Ascending aorta (tissue), 2 donors: ENCODE measurements at regions of chr10 and their contacts with region 1.

Region 1: DNA sequence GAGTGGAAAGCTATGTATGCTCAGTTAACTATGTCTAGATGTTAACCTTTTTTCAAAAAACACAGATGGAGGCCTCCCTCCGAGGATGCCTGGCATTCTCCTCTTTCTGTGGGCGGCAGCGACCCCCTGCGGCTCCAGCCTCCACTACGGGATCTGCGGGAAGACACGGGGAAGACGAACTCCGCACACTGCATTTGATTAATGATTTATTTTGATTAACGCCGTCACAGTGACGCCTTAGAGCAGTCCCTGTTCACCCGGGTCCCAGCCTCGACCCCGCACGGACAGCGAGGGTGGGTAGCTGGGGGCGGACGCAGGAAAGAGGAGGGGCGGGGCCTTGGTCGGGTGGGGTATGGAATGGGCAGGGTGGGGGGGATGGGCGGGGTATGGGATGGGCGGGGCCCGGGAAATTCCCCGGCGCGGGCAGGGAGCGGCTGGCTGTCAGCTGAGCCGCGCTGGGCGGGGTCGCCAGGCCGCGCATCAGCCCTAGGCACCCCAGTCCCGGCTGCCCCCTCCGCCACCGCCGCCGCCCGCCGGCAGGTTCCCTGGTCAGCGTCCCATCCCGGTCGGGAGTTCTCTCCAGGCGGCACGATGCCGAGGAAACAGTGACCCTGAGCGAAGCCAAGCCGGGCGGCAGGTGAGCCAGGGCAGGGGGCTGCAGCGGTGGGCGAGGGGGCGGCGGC is at the start of gene OPTN:
- DNase-seq: peak; percentile 36 to 88
- H3K4me3 ChIP-seq: peak within 1 kb of the TSS; percentile 97 to 99
- H3K27ac ChIP-seq: peak within 1 kb of the TSS; percentile 96 to 99
- H3K4me1 ChIP-seq: peaks cover 2 to 7% of the 10 kb centered on the region in 2 donors
- H3K27me3 ChIP-seq: no peaks in the 10 kb centered on the region
- CTCF ChIP-seq: peak; percentile 77 to 88 (median 85)
- total RNA-seq, gene OPTN: 48.5 TPM

Region 2: DNA sequence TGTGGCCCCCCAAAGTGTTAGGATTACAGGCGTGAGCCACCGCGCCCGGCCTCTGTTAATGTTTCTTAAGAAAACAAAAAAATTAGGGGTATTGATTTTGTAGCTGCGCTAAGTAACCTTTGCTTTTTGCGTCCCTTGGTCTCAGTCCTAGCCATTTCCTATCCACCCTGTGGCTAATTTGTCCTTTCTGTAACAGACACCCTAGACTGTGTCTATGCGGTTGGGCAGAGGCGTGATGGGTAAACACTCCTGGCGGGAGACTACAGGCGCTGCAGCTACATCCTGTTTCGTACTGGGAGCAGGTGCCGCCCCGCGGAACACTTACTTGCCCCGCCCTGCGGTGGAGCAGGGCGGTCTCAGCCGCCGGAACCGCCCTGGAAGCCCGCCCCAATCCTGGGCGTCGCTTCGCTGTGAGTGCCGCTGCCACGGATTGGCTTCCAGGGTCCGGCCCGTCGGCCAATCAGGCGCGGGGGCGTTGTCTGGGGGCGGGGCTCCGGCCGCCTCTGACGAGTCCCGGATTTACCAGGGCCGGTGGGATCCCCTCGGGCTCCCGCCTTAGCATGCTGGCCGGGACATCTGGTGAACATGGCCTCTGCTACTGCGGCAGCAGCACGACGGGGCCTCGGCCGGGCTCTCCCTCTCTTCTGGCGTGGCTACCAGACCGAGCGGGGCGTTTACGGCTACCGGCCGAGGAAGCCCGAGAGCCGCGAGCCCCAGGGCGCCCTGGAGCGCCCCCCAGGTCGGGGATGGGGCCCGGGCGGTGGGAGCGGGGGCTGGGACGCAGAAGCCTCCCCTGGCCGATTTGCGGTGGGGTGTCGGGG is 1031.1 kb before region 1 on chr10 and contains the start of gene DHTKD1:
- intact Hi-C with region 1: loop called (anchors 10 kb)
- DNase-seq: peak; percentile 93 to 99
- H3K4me3 ChIP-seq: peak within 1 kb of the TSS; percentile 72 to 90
- H3K27ac ChIP-seq: peak within 1 kb of the TSS; percentile 72 to 85
- H3K4me1 ChIP-seq: peaks cover 0 to 3% of the 10 kb centered on the region in 2 donors
- H3K27me3 ChIP-seq: no peaks in the 10 kb centered on the region
- CTCF ChIP-seq: peak; percentile 21 to 63 (median 43)
- total RNA-seq, gene DHTKD1: 12.6 TPM

Region 3: DNA sequence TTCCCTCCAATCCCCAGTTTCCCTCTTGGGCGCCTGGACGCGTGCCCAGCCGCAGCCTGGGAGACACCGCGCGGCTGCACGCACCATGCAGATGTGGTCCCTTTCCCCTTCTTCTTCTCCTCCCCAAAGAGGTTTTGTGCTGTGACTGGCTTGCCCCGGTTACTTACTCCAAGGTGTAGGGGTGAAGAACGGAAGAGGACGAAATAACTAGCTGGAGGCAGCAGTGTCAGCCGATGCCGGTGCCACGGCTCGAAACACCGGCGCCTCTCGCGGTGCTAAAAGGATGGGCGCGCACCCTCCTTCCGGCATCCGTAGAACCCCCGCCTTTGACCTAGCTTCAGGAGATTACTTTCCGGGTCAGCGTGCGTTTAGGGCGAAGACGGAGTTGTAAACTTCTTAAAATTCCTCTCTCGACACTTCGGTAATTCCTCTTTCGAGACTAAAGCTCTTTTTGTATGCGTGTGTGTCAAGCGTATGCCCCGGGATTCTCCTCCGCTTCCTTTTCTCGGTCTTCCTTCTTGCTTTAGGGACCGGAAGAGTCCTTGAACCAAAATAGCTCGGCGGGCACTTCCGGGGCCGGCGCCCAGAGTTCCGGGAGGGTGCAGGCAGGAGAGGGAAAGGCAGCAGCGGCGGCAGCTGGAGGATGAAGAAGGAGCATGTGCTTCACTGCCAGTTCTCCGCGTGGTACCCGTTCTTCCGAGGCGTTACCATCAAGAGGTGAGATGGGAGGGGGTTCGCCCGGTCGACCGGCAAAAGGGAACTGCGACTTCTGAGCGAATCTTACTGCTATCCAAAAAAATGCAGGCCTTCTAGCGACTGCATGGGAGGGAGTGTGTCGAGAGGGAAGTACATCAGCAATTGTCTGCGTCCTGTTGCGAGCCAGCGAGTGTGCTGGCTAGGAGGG is 904.0 kb before region 1 on chr10 and contains the starts of genes CDC123 and NUDT5:
- intact Hi-C with region 1: loop called (anchors 5 kb)
- DNase-seq: peak; percentile 36 to 91
- H3K4me3 ChIP-seq: peak within 1 kb of the TSS; percentile 71 to 89
- H3K27ac ChIP-seq: peak within 1 kb of the TSS; percentile 88 to 92
- H3K4me1 ChIP-seq: peaks cover 9 to 27% of the 10 kb centered on the region in 2 donors
- H3K27me3 ChIP-seq: no peaks in the 10 kb centered on the region
- CTCF ChIP-seq: peak in 1 of 3 experiments; percentile 7
- total RNA-seq, gene CDC123: 33.2 TPM
- total RNA-seq, gene NUDT5: 10.2 TPM

Region 4: DNA sequence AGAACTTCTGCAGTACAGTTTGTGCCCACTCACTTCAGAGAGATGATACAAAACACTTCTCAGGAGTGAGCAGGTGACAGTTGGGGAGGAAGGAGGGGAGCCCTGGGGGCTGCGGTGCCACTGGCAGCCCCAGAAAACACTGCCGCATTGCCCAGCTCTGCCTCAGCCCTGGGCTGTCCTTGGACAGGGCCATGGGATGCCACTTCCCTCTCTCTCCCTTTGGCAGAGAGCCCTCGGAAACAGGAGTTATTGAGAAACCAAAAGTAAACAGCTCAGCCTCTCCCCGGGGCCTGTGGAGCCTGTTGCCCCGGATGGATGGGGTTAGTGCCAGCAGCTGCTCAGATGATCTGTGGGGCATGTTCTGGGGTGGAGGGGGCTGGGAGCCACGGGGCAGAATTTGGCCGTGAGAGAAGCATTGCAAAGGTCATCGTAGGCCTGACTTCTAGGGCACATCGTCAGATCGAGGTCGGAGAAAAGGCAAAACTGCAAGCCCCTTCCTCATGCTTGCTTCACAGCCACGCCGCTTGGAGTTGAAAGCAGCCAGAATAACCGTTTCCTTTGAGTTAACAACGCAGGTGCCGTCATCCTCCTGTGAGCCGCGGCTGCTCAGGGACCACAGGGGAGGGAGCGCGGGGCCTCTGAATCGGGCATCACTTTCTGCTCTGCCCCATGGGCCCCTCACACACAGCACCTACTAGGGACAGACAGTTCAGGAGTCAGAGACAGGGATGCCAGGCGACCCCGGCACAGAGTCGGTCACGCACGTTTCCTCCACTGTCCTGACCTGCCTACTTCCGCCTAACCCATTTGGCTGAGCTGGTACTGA is 494.0 kb before region 1 on chr10:
- intact Hi-C with region 1: no loop called
- DNase-seq: peak; percentile 32 to 76
- H3K4me3 ChIP-seq: peak overlapping the region; percentile 33 to 49
- H3K27ac ChIP-seq: peak overlapping the region in 1 of 2 donors; percentile 48
- H3K4me1 ChIP-seq: no peaks in the 10 kb centered on the region
- H3K27me3 ChIP-seq: no peaks in the 10 kb centered on the region
- CTCF ChIP-seq: no peak

Region 5: DNA sequence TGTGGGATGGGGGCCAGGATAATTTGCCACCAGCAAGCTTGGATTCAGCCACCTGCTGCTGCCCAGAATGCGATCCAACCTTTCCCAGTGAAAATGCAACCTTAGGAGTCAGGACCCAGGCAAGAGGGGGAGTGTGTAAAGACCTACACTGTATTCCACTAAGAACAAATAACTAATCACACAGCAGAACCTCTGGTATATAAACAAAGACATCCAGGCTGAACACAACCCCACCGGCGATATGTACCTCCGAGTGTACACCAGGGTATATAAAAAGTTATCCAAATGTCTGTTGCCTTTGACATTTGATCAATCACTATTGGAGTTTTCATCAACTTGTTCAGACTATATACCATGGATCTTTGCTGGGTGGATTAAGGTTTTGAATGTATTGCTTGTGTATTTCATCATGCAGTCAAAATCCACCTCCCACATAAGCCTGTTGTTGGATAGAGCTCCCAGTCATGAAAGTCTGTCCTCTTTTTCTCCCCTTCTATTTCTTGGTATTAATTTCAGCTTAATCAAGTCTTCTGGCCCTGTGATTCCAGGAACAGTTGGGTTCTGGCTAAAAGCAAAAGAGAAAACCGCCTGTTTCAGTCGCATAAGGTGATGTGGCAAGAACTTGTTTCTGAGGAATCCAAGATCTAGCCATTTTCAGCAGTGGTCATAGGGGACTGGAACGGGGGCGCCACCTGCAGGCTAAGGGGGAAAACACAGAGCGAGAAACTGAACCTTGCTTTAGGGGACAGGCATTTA is 389.0 kb before region 1 on chr10:
- intact Hi-C with region 1: loop called (anchors 5 kb)
- DNase-seq: peak in 1 of 2 donors; percentile 88
- H3K4me3 ChIP-seq: no peak overlapping the region
- H3K27ac ChIP-seq: peak overlapping the region; percentile 82
- H3K4me1 ChIP-seq: peaks cover 15 to 39% of the 10 kb centered on the region in 2 donors
- H3K27me3 ChIP-seq: no peaks in the 10 kb centered on the region
- CTCF ChIP-seq: peak; percentile 87 to 94 (median 90)

Region 6: GRCh38 chr10:13001041-13001886 is 98.5 kb before region 1 on chr10 and contains the start of gene CCDC3:
- intact Hi-C with region 1: loop called (anchors 2 kb)
- DNase-seq: peak in 1 of 2 donors; percentile 67
- H3K4me3 ChIP-seq: peak within 1 kb of the TSS; percentile 68 to 75
- H3K27ac ChIP-seq: peak within 1 kb of the TSS; percentile 70 to 81
- H3K4me1 ChIP-seq: peaks cover 2 to 12% of the 10 kb centered on the region in 2 donors
- H3K27me3 ChIP-seq: no peaks in the 10 kb centered on the region
- CTCF ChIP-seq: no peak
- total RNA-seq, gene CCDC3: 86.0 TPM

Region 7: GRCh38 chr10:13348216-13349017 is 248.6 kb after region 1 on chr10 and contains the start of gene SEPHS1:
- intact Hi-C with region 1: loop called (anchors 2 kb)
- DNase-seq: peak in 1 of 2 donors; percentile 85
- H3K4me3 ChIP-seq: peak within 1 kb of the TSS; percentile 90 to 93
- H3K27ac ChIP-seq: peak within 1 kb of the TSS; percentile 93 to 96
- H3K4me1 ChIP-seq: peaks cover 0 to 13% of the 10 kb centered on the region in 2 donors
- H3K27me3 ChIP-seq: no peaks in the 10 kb centered on the region
- CTCF ChIP-seq: peak in 2 of 3 experiments; percentile 5 to 10
- total RNA-seq, gene SEPHS1: 20.3 TPM